Aorta (tissue), 5 donors: ENCODE measurements at regions of chr2 and their contacts with region 1.

Region 1: DNA sequence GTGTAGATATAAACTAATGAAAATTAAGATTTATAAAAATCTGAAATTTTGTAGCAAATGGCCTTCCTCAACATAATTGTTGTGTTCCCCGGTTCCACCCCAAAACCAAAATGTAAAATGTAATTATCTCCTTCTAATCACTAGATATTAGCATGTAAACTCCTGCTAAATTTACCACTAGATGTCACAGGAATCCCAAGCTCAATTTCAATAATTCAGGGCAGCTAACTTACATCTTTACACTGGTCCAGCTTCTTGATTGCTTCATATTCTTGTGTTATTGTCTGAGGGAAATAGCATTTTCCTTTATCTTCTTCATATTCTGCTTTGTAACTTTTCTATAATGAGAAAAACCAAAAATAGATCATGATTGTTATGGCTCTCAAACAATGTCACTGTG is 42.6 kb downstream of the NEB start:
- DNase-seq: no peak
- ATAC-seq: no peak
- H3K4me3 ChIP-seq: no peak overlapping the region
- H3K27ac ChIP-seq: no peak overlapping the region
- H3K4me1 ChIP-seq: no peaks in the 10 kb centered on the region
- H3K27me3 ChIP-seq: no peaks in the 10 kb centered on the region

Region 2: GRCh38 chr2:151486053-151486452 is 205.6 kb before region 1 on chr2:
- intact Hi-C with region 1: no loop called
- DNase-seq: no peak
- ATAC-seq: no peak
- H3K4me3 ChIP-seq: no peak overlapping the region
- H3K27ac ChIP-seq: no peak overlapping the region
- H3K4me1 ChIP-seq: no peaks in the 10 kb centered on the region
- H3K27me3 ChIP-seq: no peaks in the 10 kb centered on the region

Region 3: DNA sequence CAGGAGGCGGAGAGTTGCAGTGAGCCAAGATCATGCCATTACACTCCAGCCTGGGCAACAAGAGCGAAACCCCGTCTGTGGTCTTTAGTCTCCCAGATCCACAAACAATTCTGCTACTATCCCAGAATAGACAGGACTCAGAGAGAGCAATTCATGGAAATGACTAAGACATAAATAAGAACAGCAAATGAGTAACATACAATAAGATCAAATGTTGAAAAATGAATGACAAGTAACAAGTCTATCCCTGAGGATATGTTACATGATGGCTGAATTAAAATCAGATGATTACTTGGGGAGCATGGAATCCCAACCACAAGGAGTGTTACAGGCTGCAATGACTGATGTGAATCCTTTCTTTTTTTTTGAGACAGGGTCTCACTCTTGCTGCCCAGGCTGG is 126.3 kb after region 1 on chr2:
- intact Hi-C with region 1: no loop called
- DNase-seq: no peak
- ATAC-seq: no peak
- H3K4me3 ChIP-seq: no peak overlapping the region
- H3K27ac ChIP-seq: no peak overlapping the region
- H3K4me1 ChIP-seq: peaks cover 2 to 4% of the 10 kb centered on the region in 2 donors
- H3K27me3 ChIP-seq: no peaks in the 10 kb centered on the region

Region 4: GRCh38 chr2:152025678-152026287 is 334.2 kb after region 1 on chr2:
- intact Hi-C with region 1: loop called (anchors 5 kb)
- DNase-seq: peak; percentile 89 to 95
- ATAC-seq: peak; percentile 93
- H3K4me3 ChIP-seq: no peak overlapping the region
- H3K27ac ChIP-seq: no peak overlapping the region
- H3K4me1 ChIP-seq: no peaks in the 10 kb centered on the region
- H3K27me3 ChIP-seq: no peaks in the 10 kb centered on the region